Activated naive CD4-positive, alpha-beta T cell treated with anti-CD3 and anti-CD28 coated beads for 36 hours (primary cell): ENCODE measurements at regions of chr12 and their contacts with region 1.

Region 1: GRCh38 chr12:8544295-8544694 is 3.6 kb upstream of the CLEC4E start:
- DNase-seq: peak; percentile 90
- H3K4me3 Mint-ChIP-seq: no peak overlapping the region
- H3K27ac Mint-ChIP-seq: no peak overlapping the region
- H3K4me1 Mint-ChIP-seq: peaks cover 12% of the 10 kb centered on the region
- H3K27me3 Mint-ChIP-seq: peaks cover 23% of the 10 kb centered on the region

Region 2: DNA sequence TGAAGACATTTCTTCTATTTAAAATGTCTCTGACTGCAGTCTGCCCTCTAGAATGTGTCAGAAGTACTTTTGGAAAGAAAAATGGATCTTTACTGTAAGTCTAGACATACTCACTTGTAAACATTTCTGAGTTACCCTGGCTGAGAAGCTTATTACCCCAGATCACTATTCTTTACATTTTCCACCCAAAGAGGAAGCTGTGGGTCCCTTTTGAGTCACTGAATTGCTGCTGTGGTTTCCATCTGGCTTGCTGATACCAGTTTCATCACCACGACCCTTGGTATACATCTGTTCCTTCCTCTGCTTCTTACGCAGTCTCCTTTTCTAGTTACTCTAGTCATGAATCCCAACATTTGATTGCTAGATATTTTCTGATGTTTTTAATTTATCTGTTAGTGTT is 51.2 kb before region 1 on chr12:
- CTCF ChIA-PET with region 1: interaction called, 6 read pairs
- intact Hi-C with region 1: loop called (anchors 2 kb)
- DNase-seq: peak; percentile 83
- H3K4me3 Mint-ChIP-seq: no peak overlapping the region
- H3K27ac Mint-ChIP-seq: peak overlapping the region; percentile 80
- H3K4me1 Mint-ChIP-seq: peaks cover 25% of the 10 kb centered on the region
- H3K27me3 Mint-ChIP-seq: peaks cover 5% of the 10 kb centered on the region

Region 3: DNA sequence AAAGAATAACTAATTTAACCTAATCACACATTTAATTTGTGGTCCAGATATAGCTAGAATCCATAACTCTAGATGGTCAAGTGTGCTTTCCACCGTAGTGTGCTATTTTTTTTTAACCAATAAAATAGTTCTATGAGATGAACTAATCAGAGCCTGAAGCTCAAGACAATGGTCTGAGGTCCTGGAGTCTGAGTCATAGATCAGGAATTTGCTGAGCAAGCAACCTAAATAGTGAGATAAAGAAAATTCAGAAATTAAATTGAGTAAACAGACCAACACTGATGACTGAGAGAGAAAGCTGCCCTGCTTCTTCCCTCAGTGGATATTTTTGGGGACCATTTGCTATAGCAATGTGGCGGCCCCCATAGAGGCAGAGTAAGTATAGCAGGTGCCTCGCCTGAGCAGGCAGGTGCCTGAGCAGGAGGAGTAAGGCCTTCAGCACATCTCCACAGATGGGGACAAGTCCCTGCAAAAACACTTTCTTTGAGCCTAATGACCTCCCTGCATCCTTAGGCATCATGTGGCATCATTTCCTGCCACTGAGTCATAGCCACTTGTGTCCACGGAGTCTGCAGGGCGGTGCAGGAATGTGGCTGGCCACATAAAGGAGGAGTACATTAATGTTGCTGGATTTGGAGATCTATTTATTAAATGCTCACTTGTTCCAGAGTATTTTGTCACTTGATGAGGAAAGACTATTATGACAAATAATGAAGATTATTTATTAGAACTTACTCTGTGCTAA is 10.3 kb after region 1 on chr12:
- CTCF ChIA-PET with region 1: interaction called, 6 read pairs
- intact Hi-C with region 1: loop called (anchors 1 kb)
- DNase-seq: no peak
- H3K4me3 Mint-ChIP-seq: no peak overlapping the region
- H3K27ac Mint-ChIP-seq: no peak overlapping the region
- H3K4me1 Mint-ChIP-seq: peaks cover 11% of the 10 kb centered on the region
- H3K27me3 Mint-ChIP-seq: no peaks in the 10 kb centered on the region

Region 4: GRCh38 chr12:8590842-8591550 is 46.7 kb after region 1 on chr12:
- CTCF ChIA-PET with region 1: interaction called, 12 read pairs
- intact Hi-C with region 1: no loop called
- DNase-seq: no peak
- H3K4me3 Mint-ChIP-seq: no peak overlapping the region
- H3K27ac Mint-ChIP-seq: no peak overlapping the region
- H3K4me1 Mint-ChIP-seq: no peaks in the 10 kb centered on the region
- H3K27me3 Mint-ChIP-seq: no peaks in the 10 kb centered on the region

Region 5: DNA sequence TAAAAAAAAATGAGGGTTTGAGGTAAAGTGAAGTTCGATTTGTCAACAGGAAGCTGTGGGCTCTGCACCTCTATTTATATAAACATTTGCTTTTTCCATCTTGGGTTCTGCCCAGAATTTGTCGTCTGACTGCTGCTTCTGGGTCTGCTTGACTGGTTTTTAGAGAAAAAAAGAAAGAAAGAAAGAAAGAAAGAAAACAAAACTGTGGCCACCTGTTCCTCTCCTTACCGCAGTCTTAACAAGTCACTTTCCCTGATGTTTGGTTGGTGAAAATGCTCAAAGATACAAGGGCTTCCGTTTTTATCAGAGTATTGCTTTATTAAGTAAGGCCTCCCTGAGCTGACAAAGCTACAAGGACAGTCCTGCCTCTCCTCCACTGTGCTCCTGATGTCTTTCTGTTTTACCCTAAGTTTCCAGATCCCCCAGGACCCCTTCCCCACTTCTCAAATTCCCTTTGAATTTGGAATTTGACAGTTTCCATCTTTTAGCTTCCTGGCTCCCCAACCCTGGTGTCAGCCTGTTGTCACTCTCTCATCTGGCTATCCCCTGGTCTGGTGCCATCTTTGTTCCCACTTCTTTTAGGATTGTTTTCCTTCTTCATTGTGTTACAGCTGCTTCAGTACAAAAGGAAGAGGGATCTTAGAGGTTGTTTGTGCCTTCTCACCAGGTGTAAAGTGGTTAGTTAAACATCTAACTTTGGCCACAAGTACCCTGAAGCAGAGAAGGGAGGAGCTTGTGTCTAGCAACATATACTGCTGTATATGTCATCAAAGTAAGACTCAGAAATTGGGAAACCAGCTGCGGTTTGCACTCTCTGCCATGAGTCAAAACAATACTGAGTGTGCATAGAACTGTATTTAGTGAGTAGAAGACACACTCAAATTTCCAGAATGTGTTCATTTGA is 100.3 kb after region 1 on chr12:
- CTCF ChIA-PET with region 1: interaction called, 5 read pairs
- intact Hi-C with region 1: loop called (anchors 5 kb)
- DNase-seq: peak; percentile 85
- H3K4me3 Mint-ChIP-seq: peak overlapping the region; percentile 47
- H3K27ac Mint-ChIP-seq: peak overlapping the region; percentile 86
- H3K4me1 Mint-ChIP-seq: peaks cover 36% of the 10 kb centered on the region
- H3K27me3 Mint-ChIP-seq: no peaks in the 10 kb centered on the region

Region 6: GRCh38 chr12:8860165-8860961 is 316.1 kb after region 1 on chr12:
- CTCF ChIA-PET with region 1: interaction called, 6 read pairs
- intact Hi-C with region 1: loop called (anchors 1 kb)
- DNase-seq: peak; percentile 57
- H3K4me3 Mint-ChIP-seq: no peak overlapping the region
- H3K27ac Mint-ChIP-seq: no peak overlapping the region
- H3K4me1 Mint-ChIP-seq: no peaks in the 10 kb centered on the region
- H3K27me3 Mint-ChIP-seq: no peaks in the 10 kb centered on the region

Region 7: DNA sequence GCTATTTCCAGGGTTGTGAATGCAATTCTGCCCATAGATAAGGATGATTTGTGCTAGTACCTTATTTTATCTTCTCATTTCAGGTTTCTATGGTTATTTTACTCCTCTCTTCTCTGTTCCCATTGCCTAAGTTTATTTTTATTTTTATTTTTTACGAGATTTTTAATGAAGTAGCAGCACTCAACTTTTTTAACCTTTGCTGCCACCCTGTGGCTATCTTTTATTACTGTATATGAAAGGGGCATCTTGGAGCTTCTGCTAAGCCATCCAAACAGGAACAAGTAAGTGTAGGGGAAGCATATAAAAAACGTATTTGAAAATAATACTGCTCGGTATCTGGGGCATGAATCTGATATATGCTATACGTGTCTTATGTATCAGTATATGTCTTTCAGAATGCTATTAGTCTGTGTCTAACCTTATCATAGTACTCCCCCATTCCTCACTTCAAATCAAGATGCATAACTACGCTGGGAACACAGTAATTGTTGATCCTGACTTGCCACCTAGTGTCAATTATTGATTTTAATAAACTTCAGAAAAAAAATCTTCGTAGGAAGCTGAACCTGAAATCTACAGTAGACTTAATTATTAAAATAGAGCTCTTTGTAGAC is 505.3 kb after region 1 on chr12:
- CTCF ChIA-PET with region 1: interaction called, 10 read pairs
- intact Hi-C with region 1: loop called (anchors 1 kb)
- DNase-seq: peak; percentile 33
- H3K4me3 Mint-ChIP-seq: no peak overlapping the region
- H3K27ac Mint-ChIP-seq: no peak overlapping the region
- H3K4me1 Mint-ChIP-seq: peaks cover 11% of the 10 kb centered on the region
- H3K27me3 Mint-ChIP-seq: no peaks in the 10 kb centered on the region